ENCODE measurements at regions of chr16 and their contacts with region 1.

Region 1: GRCh38 chr16:30491744-30492308 is 19.3 kb downstream of the ITGAL start:
- DNase-seq: peak; percentile 86 to 90
- H3K4me3 ChIP-seq: no peak overlapping the region
- H3K27ac ChIP-seq: no peak overlapping the region
- H3K4me1 ChIP-seq: peaks cover 15% of the 10 kb centered on the region
- H3K27me3 ChIP-seq: no peaks in the 10 kb centered on the region
- CTCF ChIP-seq: no peak

Region 2: DNA sequence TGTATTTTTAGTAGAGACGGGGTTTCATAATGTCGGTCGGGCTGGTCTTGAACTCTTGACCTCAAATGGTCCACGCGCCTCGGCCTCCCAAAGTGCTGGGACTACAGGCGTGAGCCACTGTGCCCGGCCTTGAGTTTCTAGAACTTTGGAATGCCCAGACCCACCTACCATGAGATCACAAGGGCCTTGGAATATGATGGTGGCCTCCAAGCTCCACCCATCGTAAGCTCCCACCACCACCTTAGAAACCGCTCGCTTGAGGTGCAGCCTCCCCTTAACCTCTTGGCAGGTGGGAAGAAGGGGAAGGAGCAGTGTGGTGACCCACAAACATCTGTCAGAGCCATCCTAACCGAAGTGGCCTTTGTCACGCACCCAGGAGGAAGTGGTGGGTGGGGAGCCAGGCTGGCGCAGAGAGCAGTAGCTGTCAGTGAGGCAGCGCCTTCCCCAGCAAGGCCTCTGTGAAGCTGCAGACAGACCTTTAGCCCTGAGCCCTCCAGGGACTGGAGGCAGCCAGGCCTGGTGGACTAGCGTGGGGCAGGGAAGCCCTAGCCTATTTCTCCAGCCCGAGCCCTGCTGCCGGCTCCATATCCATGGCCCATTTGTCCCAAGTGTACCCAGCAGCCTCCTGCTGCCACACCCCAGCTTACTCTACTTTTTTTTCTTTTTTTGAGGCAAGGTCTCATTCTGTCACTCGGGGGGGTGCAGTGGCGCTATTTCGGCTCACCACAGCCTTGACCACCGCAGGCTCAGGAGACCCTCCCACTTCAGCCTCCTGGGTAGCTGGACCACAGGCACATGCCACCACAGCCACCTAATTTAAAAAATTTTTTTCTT is 33.0 kb before region 1 on chr16:
- CTCF ChIA-PET with region 1: no interaction called
- POLR2A ChIA-PET with region 1: interaction called, 18 read pairs
- intact Hi-C with region 1: no loop called
- DNase-seq: no peak
- H3K4me3 ChIP-seq: no peak overlapping the region
- H3K27ac ChIP-seq: no peak overlapping the region
- H3K4me1 ChIP-seq: no peaks in the 10 kb centered on the region
- H3K27me3 ChIP-seq: no peaks in the 10 kb centered on the region
- CTCF ChIP-seq: no peak

Region 3: GRCh38 chr16:30526823-30527635 is 35.2 kb after region 1 on chr16:
- CTCF ChIA-PET with region 1: no interaction called
- POLR2A ChIA-PET with region 1: interaction called, 60 read pairs
- intact Hi-C with region 1: no loop called
- DNase-seq: peak; percentile 94 to 100
- H3K4me3 ChIP-seq: peak overlapping the region; percentile 97
- H3K27ac ChIP-seq: peak overlapping the region; percentile 79
- H3K4me1 ChIP-seq: peaks cover 32% of the 10 kb centered on the region
- H3K27me3 ChIP-seq: no peaks in the 10 kb centered on the region
- CTCF ChIP-seq: peak; percentile 50; the same call in 1 of the 2 replicates

Region 4: DNA sequence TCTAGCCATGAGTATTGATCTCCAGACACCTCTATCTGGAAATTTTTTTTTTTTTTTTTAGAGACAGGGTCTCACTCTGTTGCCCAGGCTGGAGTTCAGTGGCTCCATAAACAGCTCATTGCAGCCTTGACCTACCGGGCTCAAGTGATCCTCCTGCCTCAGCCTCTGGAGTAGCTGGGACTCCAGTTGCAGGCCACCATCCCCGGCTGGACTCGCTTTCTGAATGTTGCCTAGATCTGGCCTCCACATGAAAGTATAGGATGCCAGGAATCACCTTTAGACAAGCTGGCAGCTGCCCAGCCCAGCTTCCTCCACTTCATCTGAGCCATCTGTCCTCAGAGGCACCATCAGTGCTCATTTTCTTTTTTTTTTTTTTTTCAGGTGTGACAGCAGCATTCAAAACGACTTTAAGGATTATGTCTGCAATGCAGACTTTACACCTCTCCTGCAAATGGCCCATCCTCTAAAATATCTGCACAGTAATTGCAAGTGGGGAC is 152.6 kb after region 1 on chr16:
- CTCF ChIA-PET with region 1: no interaction called
- POLR2A ChIA-PET with region 1: interaction called, 11 read pairs
- intact Hi-C with region 1: no loop called
- DNase-seq: no peak
- H3K4me3 ChIP-seq: no peak overlapping the region
- H3K27ac ChIP-seq: no peak overlapping the region
- H3K4me1 ChIP-seq: no peaks in the 10 kb centered on the region
- H3K27me3 ChIP-seq: no peaks in the 10 kb centered on the region
- CTCF ChIP-seq: no peak

Region 5: DNA sequence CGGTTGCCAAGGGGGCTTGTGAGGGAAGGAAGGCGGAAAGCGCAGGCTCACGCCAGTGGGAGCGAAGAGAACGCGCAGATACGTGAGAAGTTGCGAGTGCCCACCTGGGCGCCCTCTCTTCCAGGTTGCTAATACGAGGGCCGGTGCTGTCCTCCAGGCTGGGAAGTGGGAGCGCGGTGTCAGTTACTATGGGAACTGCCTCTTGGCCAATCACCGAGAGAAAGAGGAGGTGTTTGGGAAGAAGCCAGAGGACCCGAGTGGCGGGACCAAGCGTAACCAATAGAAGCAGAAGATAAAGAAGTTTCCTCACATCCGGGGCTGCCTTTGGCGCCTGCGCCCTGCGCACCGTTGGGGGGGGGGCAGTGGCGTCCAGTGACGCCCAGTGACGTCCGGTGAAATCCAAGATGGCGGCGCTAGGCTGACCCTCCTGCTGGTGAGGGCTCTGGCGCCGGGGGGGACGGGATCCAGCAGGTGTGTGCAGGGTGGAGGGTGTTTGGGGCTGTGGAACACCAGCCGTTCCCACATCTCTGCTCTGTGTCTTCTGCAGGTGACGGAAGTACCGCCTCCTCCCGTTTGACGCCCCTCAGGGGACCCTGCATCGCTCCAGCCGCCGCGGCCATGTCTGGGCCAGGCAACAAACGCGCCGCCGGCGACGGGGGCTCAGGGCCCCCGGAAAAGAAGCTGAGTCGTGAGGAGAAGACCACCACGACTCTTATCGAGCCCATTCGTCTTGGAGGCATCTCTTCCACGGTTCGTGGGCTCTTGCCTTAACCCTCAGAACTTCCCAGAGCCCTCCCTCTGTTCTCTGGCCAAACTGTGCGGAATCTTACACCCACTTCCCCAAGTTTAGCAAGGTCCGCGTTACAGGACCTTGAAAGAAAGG is 270.3 kb after region 1 on chr16 and contains the starts of genes CFAP119 and RNF40:
- CTCF ChIA-PET with region 1: no interaction called
- POLR2A ChIA-PET with region 1: interaction called, 36 read pairs
- intact Hi-C with region 1: no loop called
- DNase-seq: peak; percentile 96 to 99
- H3K4me3 ChIP-seq: peak within 1 kb of the TSS; percentile 83
- H3K27ac ChIP-seq: peak within 1 kb of the TSS; percentile 2; the same call in 1 of the 2 replicates
- H3K4me1 ChIP-seq: peaks cover 24% of the 10 kb centered on the region
- H3K27me3 ChIP-seq: no peaks in the 10 kb centered on the region
- CTCF ChIP-seq: no peak
- total RNA-seq, gene CFAP119: 17.9 and 19.9 TPM in 2 replicates
- total RNA-seq, gene RNF40: 149 and 178 TPM in 2 replicates